ENCODE measurements at regions of chr6 and their contacts with region 1.

Region 1: DNA sequence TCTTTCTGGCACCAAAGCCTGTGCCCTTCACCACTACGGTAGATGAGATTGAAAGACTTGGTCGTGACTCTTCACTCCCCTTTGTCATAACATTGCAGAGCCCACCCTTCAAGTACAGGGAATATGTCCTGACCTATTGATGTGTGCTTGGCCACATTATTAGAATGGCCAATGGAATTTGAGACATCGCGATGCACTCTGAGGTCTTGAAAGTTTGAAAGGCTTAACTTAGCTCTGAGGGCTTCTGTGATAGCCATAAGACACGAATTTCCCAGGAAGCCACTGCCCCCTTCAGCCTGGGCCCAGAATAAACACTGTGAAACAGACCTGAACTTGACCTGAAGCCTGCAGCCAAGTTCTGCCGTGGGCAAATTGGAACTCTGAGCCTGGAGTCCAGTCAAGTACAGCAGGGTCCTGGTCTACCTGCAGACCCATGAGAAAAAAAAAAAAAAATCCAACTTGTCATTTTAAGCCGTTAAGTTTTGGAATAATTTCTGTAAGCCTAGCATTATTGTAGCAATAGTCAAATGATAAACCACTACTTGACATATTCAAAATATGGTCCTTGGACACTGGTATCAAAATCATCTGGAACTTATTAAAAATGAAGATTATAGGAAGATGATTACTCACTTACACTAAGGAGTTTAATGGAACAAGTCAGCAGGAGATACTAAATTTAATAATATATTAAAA is 36.9 kb upstream of the TRAF3IP2 start:
- DNase-seq: peak; percentile 59 to 80
- ATAC-seq: peak; percentile 54 to 79 (median 68)
- H3K4me3 ChIP-seq: no peak overlapping the region
- H3K27ac ChIP-seq: no peak overlapping the region
- H3K4me1 ChIP-seq: peaks cover 4% of the 10 kb centered on the region
- H3K27me3 ChIP-seq: no peaks in the 10 kb centered on the region
- CTCF ChIP-seq: peak; percentile 61

Region 2: DNA sequence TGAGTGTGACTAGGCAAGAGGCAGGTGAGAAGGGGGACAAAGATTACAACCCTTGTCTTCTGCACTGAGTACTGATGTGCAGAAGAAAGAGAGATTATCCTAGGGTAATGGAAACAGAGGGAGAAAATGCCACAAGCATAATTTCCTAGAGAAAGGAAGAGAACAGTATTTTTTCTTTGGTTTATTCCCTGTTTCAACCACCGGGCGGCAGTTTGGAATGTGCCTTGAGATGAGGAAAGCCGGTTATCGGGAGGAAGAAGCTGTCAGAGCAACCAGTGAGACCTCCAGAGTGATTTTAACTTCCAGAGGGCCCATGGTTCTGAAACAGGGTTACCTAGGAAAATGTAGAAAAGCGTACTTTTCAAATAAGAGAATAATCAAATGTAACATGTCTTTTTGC is 281.0 kb before region 1 on chr6:
- intact Hi-C with region 1: loop called in 1 of 2 experiments (anchors 10 kb)
- DNase-seq: no peak
- ATAC-seq: peak in 1 of 4 donors; percentile 33
- H3K4me3 ChIP-seq: no peak overlapping the region
- H3K27ac ChIP-seq: no peak overlapping the region
- H3K4me1 ChIP-seq: no peaks in the 10 kb centered on the region
- H3K27me3 ChIP-seq: no peaks in the 10 kb centered on the region
- CTCF ChIP-seq: peak; percentile 27

Region 3: GRCh38 chr6:111552241-111552744 is 90.3 kb before region 1 on chr6:
- intact Hi-C with region 1: loop called in 1 of 2 experiments (anchors 10 kb)
- DNase-seq: peak; percentile 64 to 86
- ATAC-seq: peak; percentile 92 to 93 (median 93)
- H3K4me3 ChIP-seq: peak overlapping the region; percentile 23
- H3K27ac ChIP-seq: peak overlapping the region; percentile 88
- H3K4me1 ChIP-seq: peaks cover 56% of the 10 kb centered on the region
- H3K27me3 ChIP-seq: no peaks in the 10 kb centered on the region
- CTCF ChIP-seq: no peak

Region 4: DNA sequence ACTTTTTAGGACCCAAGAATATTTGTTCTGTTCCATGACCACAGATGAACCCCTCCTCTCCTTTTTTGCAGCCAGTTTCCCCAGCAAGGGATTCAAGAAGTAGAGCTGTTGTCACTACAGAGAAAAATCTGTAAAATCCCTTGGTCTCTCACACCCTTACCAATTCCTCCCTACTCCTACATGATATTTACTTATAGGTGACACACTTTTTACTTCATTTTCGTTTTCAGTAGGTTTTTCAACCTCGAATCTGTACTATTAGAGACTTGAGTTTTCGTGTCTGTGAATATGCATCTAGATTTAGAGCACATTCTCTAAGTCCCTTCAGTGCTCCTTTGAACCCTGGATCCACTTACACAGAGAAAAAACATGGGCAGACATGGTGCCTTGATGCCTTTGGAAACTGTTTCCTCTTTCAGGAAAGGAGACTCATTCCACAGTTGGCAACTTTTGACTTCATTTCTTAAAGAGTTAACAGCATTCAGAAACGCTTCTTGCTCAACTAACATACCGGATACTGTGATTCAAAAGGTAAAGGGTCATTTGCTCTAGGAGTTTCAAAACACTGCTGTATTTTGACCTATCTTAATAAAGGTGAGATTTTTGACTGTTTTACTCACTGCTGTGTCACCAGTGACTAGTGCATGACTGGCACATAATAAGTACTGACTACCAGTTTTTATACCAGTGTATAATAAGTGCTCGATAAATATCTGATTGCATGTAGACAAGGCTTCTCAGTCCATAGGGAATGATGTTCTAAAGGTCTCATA is 561.2 kb after region 1 on chr6:
- intact Hi-C with region 1: no loop called
- DNase-seq: no peak
- ATAC-seq: peak in 1 of 4 donors; percentile 34
- H3K4me3 ChIP-seq: no peak overlapping the region
- H3K27ac ChIP-seq: no peak overlapping the region
- H3K4me1 ChIP-seq: no peaks in the 10 kb centered on the region
- H3K27me3 ChIP-seq: peaks cover 0 to 3% (median 0%) of the 10 kb centered on the region in 3 donors
- CTCF ChIP-seq: no peak

Measured in psoas muscle (tissue), 8 donors.